Activated CD4-positive, alpha-beta T cell treated with anti-CD3 and anti-CD28 coated beads for 36 hours (primary cell): ENCODE measurements at regions of chr21 and their contacts with region 1.

Region 1: GRCh38 chr21:42258153-42258884 is 39.4 kb downstream of the ABCG1 start:
- DNase-seq: peak; percentile 90
- ATAC-seq: peak; percentile 98
- H3K4me3 Mint-ChIP-seq: no peak overlapping the region
- H3K27ac Mint-ChIP-seq: no peak overlapping the region
- H3K4me1 Mint-ChIP-seq: peaks cover 18% of the 10 kb centered on the region
- H3K27me3 Mint-ChIP-seq: no peaks in the 10 kb centered on the region

Region 2: GRCh38 chr21:42093991-42094421 is 164.3 kb before region 1 on chr21:
- CTCF ChIA-PET with region 1: no interaction called
- POLR2A ChIA-PET with region 1: no interaction called
- intact Hi-C with region 1: no loop called
- DNase-seq: no peak
- ATAC-seq: no peak
- H3K4me3 Mint-ChIP-seq: no peak overlapping the region
- H3K27ac Mint-ChIP-seq: no peak overlapping the region
- H3K4me1 Mint-ChIP-seq: peaks cover 14% of the 10 kb centered on the region
- H3K27me3 Mint-ChIP-seq: no peaks in the 10 kb centered on the region

Region 3: DNA sequence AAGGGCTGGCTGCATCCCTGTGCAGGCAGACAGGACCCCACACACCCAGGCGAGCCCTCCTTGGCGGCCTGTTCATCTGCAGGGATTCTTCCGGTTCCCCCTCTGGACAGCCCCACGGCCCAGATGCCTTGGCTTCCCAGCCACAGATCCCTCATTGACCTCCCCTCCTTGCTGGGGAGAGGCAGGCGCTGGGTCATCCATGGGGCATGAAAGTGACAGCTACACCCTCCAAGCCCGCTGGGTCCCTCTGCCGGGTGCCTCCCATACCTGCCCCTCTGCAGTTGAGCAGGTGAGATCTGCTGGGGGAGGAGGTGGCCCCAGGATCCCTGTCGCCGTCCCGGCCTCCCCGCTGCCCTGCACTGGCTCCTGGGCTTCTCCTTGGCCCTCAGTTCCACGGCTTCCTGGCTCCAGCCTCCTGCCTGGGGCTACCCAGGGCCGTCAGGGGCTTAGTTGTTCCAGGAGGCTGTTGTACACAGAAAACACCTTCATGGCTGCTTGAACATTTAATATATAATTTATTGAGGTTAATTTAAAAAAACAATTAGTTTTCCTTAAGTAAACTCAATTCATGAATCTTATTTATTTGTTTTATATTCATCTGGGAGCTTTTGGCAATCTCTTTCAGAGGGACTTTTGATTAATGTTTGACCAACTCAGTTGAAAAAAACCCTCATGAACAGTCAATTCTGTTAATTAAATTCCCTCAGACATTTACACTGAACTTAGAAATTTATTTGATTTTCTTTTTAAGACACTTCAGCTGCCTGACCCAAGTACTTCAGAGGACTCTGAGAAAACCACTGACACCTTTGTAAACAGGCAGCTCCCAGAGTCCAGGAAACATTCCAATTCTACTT is 107.0 kb before region 1 on chr21:
- CTCF ChIA-PET with region 1: interaction called, 93 read pairs
- POLR2A ChIA-PET with region 1: interaction called, 3 read pairs
- intact Hi-C with region 1: no loop called
- DNase-seq: no peak
- ATAC-seq: no peak
- H3K4me3 Mint-ChIP-seq: no peak overlapping the region
- H3K27ac Mint-ChIP-seq: no peak overlapping the region
- H3K4me1 Mint-ChIP-seq: no peaks in the 10 kb centered on the region
- H3K27me3 Mint-ChIP-seq: no peaks in the 10 kb centered on the region

Region 4: DNA sequence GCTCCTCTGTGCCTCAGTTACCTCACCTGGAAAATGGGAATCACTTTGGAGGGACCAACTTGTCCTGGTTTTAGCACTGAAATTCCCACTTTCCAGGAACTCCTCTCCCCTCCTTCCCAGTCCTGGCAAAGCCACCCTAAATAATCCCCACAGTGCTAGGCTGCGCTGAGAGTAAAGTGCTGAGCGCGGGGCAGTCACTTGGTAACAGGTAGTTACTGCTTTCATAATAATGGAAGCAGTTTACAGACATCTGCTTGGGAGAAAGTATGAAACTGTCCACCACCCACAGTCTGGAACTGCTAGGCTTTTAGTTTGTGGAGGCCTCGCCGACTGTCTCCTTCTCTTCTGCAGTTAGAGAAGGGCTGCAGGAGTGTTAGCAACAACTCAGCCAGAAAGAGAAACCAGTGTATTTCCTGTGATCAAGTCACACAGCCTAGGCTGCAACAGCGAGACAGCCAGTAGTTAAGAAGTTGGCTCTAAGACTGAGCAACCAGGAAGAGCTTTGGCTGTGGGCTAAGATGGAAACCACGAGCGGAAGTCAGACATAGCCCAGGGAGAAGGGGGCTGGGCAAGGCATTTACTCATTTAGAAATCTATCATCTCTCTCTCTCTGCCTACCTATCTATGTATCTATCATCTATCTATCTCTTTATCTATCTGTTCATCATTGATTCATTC is 70.2 kb before region 1 on chr21:
- CTCF ChIA-PET with region 1: interaction called, 14 read pairs
- POLR2A ChIA-PET with region 1: no interaction called
- intact Hi-C with region 1: no loop called
- DNase-seq: peak; percentile 88
- ATAC-seq: peak; percentile 93
- H3K4me3 Mint-ChIP-seq: peak overlapping the region; percentile 57
- H3K27ac Mint-ChIP-seq: peak overlapping the region; percentile 95
- H3K4me1 Mint-ChIP-seq: peaks cover 65% of the 10 kb centered on the region
- H3K27me3 Mint-ChIP-seq: peaks cover 2% of the 10 kb centered on the region

Region 5: GRCh38 chr21:42238185-42238934 is 20.0 kb before region 1 on chr21:
- CTCF ChIA-PET with region 1: interaction called, 42 read pairs
- POLR2A ChIA-PET with region 1: no interaction called
- intact Hi-C with region 1: no loop called
- DNase-seq: peak; percentile 61
- ATAC-seq: peak; percentile 7
- H3K4me3 Mint-ChIP-seq: peak overlapping the region; percentile 50
- H3K27ac Mint-ChIP-seq: peak overlapping the region; percentile 92
- H3K4me1 Mint-ChIP-seq: peaks cover 59% of the 10 kb centered on the region
- H3K27me3 Mint-ChIP-seq: no peaks in the 10 kb centered on the region

Region 6: GRCh38 chr21:42493104-42494055 is 235.1 kb after region 1 on chr21:
- CTCF ChIA-PET with region 1: no interaction called
- POLR2A ChIA-PET with region 1: no interaction called
- intact Hi-C with region 1: no loop called
- DNase-seq: no peak
- ATAC-seq: no peak
- H3K4me3 Mint-ChIP-seq: no peak overlapping the region
- H3K27ac Mint-ChIP-seq: no peak overlapping the region
- H3K4me1 Mint-ChIP-seq: peaks cover 25% of the 10 kb centered on the region
- H3K27me3 Mint-ChIP-seq: peaks cover 2% of the 10 kb centered on the region